Heart left ventricle (tissue), 16 donors: ENCODE measurements at regions of chr11 and their contacts with region 1.

Region 1: DNA sequence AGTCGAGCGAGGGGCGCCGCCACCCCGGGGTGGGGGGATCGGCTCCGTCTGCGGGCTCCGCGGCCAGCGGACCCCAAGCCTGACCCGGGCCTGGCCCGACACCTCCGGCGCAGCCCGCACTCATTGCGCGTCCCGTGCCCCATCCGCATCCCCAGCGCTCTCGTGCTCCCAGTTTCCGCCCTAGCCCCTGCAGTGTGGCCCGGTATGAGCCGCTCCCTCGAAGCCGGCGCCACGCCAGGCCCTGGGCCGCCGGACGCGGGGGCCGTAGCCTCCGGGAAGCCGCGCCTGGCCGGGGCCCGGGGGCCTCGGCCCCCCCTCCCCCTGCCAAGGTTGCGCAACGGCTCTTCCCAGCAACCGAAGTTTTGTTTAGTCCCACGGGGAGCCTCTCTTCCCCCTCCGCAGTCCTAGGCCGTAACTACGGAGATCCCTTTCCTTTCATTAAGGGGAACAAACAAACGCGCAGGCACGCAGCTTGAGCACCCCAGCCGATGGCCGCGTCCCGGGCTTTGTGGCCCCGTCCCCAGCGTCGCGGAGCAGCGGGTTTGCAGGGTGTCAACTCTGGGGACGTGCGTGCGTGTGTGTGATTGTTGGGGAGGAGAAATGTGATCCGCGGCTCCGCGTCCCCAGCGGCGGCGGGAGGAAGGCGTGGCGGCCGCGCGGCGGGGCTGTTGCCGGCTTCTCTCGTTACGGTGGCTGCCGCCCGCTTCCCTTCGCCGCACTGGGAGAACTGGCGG is 883 bp downstream of the HIPK3 start:
- DNase-seq: peak; percentile 91 to 95 (median 92)
- ATAC-seq: peak; percentile 60 to 89 (median 86)
- H3K4me3 ChIP-seq: peak overlapping the region; percentile 78 to 95 (median 94)
- H3K27ac ChIP-seq: peak overlapping the region; percentile 99 to 100 (median 100)
- H3K4me1 ChIP-seq: peaks cover 4 to 52% (median 33%) of the 10 kb centered on the region in 12 donors
- H3K27me3 ChIP-seq: no peaks in the 10 kb centered on the region
- CTCF ChIP-seq: peak in 11 of 12 donors; percentile 5 to 56 (median 34)
- POLR2A ChIP-seq: peak in 1 of 2 donors; percentile 71

Region 2: GRCh38 chr11:33161120-33162005 is 96.7 kb before region 1 on chr11 and contains the start of gene CSTF3:
- intact Hi-C with region 1: loop called (anchors 2 to 5 kb)
- DNase-seq: peak; percentile 100
- ATAC-seq: peak; percentile 98 to 100 (median 99)
- H3K4me3 ChIP-seq: peak within 1 kb of the TSS; percentile 60 to 94 (median 78)
- H3K27ac ChIP-seq: peak within 1 kb of the TSS in 11 of 12 donors; percentile 58 to 90 (median 75)
- H3K4me1 ChIP-seq: peaks cover 4 to 43% (median 19%) of the 10 kb centered on the region in 12 donors
- H3K27me3 ChIP-seq: no peaks in the 10 kb centered on the region
- CTCF ChIP-seq: peak; percentile 33 to 70 (median 60)
- POLR2A ChIP-seq: peak in 1 of 2 donors; percentile 57
- total RNA-seq, gene CSTF3: 5.9 to 15.6 (median 13.2) TPM

Region 3: GRCh38 chr11:33237039-33237597 is 20.9 kb before region 1 on chr11:
- intact Hi-C with region 1: loop called in 1 of 10 experiments (anchors 2 kb)
- DNase-seq: no peak
- ATAC-seq: no peak
- H3K4me3 ChIP-seq: no peak overlapping the region
- H3K27ac ChIP-seq: no peak overlapping the region
- H3K4me1 ChIP-seq: peaks cover 0 to 17% (median 5%) of the 10 kb centered on the region in 12 donors
- H3K27me3 ChIP-seq: no peaks in the 10 kb centered on the region
- CTCF ChIP-seq: no peak
- POLR2A ChIP-seq: no peak

Region 4: GRCh38 chr11:33324302-33324985 is 66.4 kb after region 1 on chr11:
- intact Hi-C with region 1: loop called (anchors 2 to 5 kb)
- DNase-seq: no peak
- ATAC-seq: peak in 3 of 4 donors; percentile 21 to 48 (median 32)
- H3K4me3 ChIP-seq: no peak overlapping the region
- H3K27ac ChIP-seq: peak overlapping the region in 6 of 12 donors; percentile 4 to 31 (median 10)
- H3K4me1 ChIP-seq: peaks cover 14 to 97% (median 78%) of the 10 kb centered on the region in 12 donors
- H3K27me3 ChIP-seq: no peaks in the 10 kb centered on the region
- CTCF ChIP-seq: no peak
- POLR2A ChIP-seq: no peak

Region 5: GRCh38 chr11:33736148-33736809 is 478.2 kb after region 1 on chr11 and contains the start of gene CD59:
- intact Hi-C with region 1: loop called in 2 of 10 experiments (anchors 5 kb)
- DNase-seq: peak; percentile 98
- ATAC-seq: peak; percentile 94 to 96 (median 96)
- H3K4me3 ChIP-seq: peak within 1 kb of the TSS; percentile 75 to 98 (median 92)
- H3K27ac ChIP-seq: peak within 1 kb of the TSS; percentile 93 to 100 (median 98)
- H3K4me1 ChIP-seq: peaks cover 4 to 51% (median 41%) of the 10 kb centered on the region in 12 donors
- H3K27me3 ChIP-seq: no peaks in the 10 kb centered on the region
- CTCF ChIP-seq: peak in 1 of 12 donors; percentile 19
- POLR2A ChIP-seq: peak; percentile 80 to 98
- total RNA-seq, gene CD59: 588 to 1,434 (median 930) TPM